ENCODE measurements at regions of chr14 and their contacts with region 1.

Region 1: DNA sequence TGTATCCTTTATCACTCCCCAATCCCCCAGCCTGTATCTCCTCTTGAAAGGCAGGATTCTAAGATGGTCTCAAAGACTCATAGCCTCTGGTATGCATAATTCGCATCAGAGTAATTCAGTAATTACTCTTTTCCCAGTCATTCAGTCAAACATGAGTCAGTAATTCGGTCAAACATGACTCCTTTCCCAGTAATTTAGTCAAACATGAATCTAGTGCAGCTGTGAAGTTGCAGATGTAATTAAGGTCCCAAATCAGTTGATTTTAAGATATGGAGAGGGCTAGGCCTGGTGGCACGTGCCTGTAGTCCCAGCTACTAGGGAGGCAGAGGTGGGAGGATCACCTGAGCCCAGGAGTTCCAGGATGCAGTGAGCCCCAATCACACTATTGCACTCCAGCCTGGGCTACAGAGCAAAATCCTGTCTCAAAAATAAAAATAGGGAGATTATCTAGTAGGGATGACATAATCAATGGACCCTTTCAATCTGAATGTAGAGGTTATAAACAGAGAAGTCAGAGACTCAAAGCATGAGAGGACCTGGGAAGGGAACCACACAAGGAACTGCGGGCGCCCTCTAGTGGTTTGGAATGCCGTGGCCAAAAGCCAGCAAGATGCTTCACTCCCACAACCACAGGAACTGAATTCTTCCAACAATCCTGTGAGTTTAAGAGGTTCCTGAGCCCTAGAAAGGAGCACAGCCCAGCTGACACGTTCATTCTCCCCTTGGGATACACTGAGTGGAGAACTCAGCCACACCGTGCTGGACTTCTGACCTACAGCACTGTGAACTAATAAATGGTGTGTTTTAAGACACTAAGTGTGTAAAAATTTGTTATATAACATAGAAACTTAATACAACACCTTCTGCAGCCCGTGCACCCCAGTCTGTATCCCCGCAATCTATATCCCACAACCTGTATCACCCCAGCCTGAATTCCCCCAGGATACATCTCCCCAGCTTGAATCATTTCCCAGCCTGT is 14.3 kb upstream of the ARMH4 start:
- DNase-seq: peak; percentile 85
- ATAC-seq: peak; percentile 82 to 86

Region 2: DNA sequence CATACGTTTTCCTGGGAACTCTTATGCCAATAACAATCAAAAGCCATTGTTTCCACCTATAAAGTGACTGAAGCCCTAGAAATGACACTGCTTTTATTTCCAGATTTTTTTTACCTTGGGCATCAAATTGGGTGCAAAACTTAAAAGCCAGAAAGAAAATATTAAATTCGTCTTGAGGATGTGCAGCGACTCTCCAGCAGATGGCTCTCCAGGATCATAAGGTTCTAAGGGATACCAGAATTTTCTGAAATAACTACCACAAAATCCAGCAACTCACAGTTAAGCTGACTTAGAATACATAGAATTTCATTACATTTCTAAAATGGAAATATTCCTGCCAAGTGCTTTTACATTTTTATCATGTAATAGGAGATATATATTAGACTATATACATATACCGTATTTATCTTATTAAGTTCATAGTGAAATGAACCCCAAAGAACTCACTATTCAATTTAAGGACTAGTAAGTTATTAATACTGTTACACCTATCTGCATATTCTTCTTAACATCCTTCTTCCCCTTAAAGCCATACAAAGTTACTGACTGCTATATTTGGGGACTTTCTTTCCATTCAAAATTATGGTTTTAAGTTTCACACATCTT is 58.2 kb before region 1 on chr14:
- intact Hi-C with region 1: loop called (anchors 2 to 5 kb)
- DNase-seq: peak; percentile 32
- ATAC-seq: peak in 1 of 2 donors; percentile 50

Measured in left cardiac atrium (tissue), 4 donors.